AG04449 (cell line): ENCODE measurements at regions of chr4 and their contacts with region 1.

Region 1: GRCh38 chr4:109433205-109434006 is at the start of gene SEC24B:
- DNase-seq: no peak
- H3K4me3 ChIP-seq: peak within 1 kb of the TSS; percentile 79
- CTCF ChIP-seq: peak; percentile 63

Region 2: DNA sequence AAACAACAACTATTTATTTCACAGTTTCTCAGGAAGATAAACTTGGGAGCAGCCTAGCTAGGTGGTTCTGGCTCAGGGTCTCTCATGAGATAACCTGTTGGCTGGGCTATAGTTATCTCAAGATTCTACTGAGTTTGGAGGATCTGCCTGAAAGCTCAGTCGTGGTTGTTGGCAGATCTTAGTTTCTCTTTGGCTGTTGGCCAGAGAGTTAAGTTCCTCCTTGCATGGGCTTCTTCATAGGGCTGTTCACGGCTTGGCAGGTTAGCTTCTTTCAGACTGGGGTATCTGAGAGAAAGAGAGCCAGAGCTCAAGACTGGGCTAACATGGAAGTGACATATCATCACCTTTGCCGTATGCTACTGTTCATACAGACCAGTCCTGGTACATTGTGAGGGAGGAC is 28.9 kb after region 1 on chr4:
- CTCF ChIA-PET with region 1: interaction called, 12 read pairs
- POLR2A ChIA-PET with region 1: no interaction called
- DNase-seq: no peak
- H3K4me3 ChIP-seq: no peak overlapping the region
- CTCF ChIP-seq: no peak

Region 3: GRCh38 chr4:109803924-109804571 is 370.6 kb after region 1 on chr4:
- CTCF ChIA-PET with region 1: interaction called, 35 read pairs
- POLR2A ChIA-PET with region 1: interaction called, 3 read pairs
- DNase-seq: no peak
- H3K4me3 ChIP-seq: no peak overlapping the region
- CTCF ChIP-seq: peak; percentile 28

Region 4: GRCh38 chr4:109826719-109827118 is 393.3 kb after region 1 on chr4:
- CTCF ChIA-PET with region 1: interaction called, 55 read pairs
- POLR2A ChIA-PET with region 1: no interaction called
- DNase-seq: no peak
- H3K4me3 ChIP-seq: no peak overlapping the region
- CTCF ChIP-seq: peak; percentile 20

Region 5: GRCh38 chr4:109921384-109921808 is 488.0 kb after region 1 on chr4:
- CTCF ChIA-PET with region 1: no interaction called
- POLR2A ChIA-PET with region 1: no interaction called
- DNase-seq: peak; percentile 66
- H3K4me3 ChIP-seq: no peak overlapping the region
- CTCF ChIP-seq: no peak